ENCODE measurements at regions of chr20 and their contacts with region 1.

Region 1: GRCh38 chr20:37111926-37112455 is 16.2 kb upstream of the RBL1 start:
- DNase-seq: no peak
- H3K4me3 ChIP-seq: no peak overlapping the region
- H3K27ac ChIP-seq: no peak overlapping the region
- H3K4me1 ChIP-seq: no peaks in the 10 kb centered on the region
- H3K27me3 ChIP-seq: no peaks in the 10 kb centered on the region
- CTCF ChIP-seq: no peak
- POLR2A ChIP-seq: no peak

Region 2: GRCh38 chr20:37137547-37137946 is 25.6 kb after region 1 on chr20:
- intact Hi-C with region 1: loop called (anchors 2 kb)
- DNase-seq: no peak
- H3K4me3 ChIP-seq: no peak overlapping the region
- H3K27ac ChIP-seq: no peak overlapping the region
- H3K4me1 ChIP-seq: no peaks in the 10 kb centered on the region
- H3K27me3 ChIP-seq: no peaks in the 10 kb centered on the region
- CTCF ChIP-seq: no peak
- POLR2A ChIP-seq: no peak